GM13977 (cell line): ENCODE measurements at regions of chr2 and their contacts with region 1.

Region 1: GRCh38 chr2:11234309-11234708 is 79.0 kb downstream of the SLC66A3 start:
- DNase-seq: no peak
- CTCF ChIP-seq: peak; percentile 37

Region 2: GRCh38 chr2:11175293-11175795 is 59.0 kb before region 1 on chr2:
- in situ Hi-C with region 1: no loop called
- DNase-seq: no peak
- CTCF ChIP-seq: no peak

Region 3: GRCh38 chr2:11411768-11412448 is 177.6 kb after region 1 on chr2:
- in situ Hi-C with region 1: loop called (anchors 25 kb)
- DNase-seq: no peak
- CTCF ChIP-seq: peak; percentile 63

Region 4: GRCh38 chr2:11829947-11830707 is 595.8 kb after region 1 on chr2:
- in situ Hi-C with region 1: no loop called
- DNase-seq: peak; percentile 74
- CTCF ChIP-seq: peak; percentile 19